Adrenal gland (tissue), 19 donors: ENCODE measurements at regions of chr16 and their contacts with region 1.

Region 1: GRCh38 chr16:30609926-30610839 is at the start of gene ZNF689:
- DNase-seq: peak; percentile 95 to 97 (median 96)
- H3K4me3 ChIP-seq: peak within 1 kb of the TSS; percentile 3 to 91 (median 74)
- H3K27ac ChIP-seq: peak within 1 kb of the TSS; percentile 85 to 97 (median 91)
- H3K4me1 ChIP-seq: peaks cover 5% of the 10 kb centered on the region in 2 donors
- H3K27me3 ChIP-seq: no peaks in the 10 kb centered on the region
- CTCF ChIP-seq: no peak
- POLR2A ChIP-seq: peak; percentile 37 to 75
- total RNA-seq, gene ZNF689: 6.8 to 12.9 (median 9.9) TPM

Region 2: DNA sequence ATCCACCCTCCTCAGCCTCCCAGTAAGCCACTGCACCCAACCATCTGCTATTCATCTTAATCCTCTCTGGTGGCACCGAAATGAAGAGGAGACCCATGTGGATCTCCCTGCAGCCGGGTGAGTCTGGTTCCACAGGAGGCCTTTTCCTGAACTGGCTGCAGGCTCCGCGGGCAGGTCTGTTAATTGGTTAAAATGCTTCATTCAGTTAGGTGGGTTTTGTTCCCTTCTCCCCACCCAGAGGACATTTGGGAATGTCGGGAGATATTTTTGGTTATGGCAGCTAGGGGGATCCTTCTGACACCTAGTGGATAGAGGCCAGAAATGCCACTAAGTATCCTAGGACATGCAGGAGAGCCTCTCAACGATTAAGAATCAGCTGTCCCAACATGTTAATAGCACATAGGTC is 881.1 kb before region 1 on chr16:
- intact Hi-C with region 1: no loop called
- DNase-seq: peak in 3 of 7 donors; percentile 8 to 22 (median 15)
- H3K4me3 ChIP-seq: no peak overlapping the region
- H3K27ac ChIP-seq: no peak overlapping the region
- H3K4me1 ChIP-seq: no peaks in the 10 kb centered on the region
- H3K27me3 ChIP-seq: peaks cover 4% of the 10 kb centered on the region
- CTCF ChIP-seq: peak; percentile 38 to 58 (median 50)
- POLR2A ChIP-seq: no peak

Region 3: GRCh38 chr16:30567991-30568638 is 42.1 kb before region 1 on chr16:
- intact Hi-C with region 1: loop called in 1 of 2 experiments (anchors 10 kb)
- DNase-seq: peak in 2 of 7 donors; percentile 43
- H3K4me3 ChIP-seq: no peak overlapping the region
- H3K27ac ChIP-seq: peak overlapping the region in 2 of 5 donors; percentile 32 to 43
- H3K4me1 ChIP-seq: peaks cover 10 to 32% of the 10 kb centered on the region in 2 donors
- H3K27me3 ChIP-seq: no peaks in the 10 kb centered on the region
- CTCF ChIP-seq: no peak
- POLR2A ChIP-seq: no peak